PC-9 (cell line): ENCODE measurements at regions of chr9 and their contacts with region 1.

Region 1: DNA sequence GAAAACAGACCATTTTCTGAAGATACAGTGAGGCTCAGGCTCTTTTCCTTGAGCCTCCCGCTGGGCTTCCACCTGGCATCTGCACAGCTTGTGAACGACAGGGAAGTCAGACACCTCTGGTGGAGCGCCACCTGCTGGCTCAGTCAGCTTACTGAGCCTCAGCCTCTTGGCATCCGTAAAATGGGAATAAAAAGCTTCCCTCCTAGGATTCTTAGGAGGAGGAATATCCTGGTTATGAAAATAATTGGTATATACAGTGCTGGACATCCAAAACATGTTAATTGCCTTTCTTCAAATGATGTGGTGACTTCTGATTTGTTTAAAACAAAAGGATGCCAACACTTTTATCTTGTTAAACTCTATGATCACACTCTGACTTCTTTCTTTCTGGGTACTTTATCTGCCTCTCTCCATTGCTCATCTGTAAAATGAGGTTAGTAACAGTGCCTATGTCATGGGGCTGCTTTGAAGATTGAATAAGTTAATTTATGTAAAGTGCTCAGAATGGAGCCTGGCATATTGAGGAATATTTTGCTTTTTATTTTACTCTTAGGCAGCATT is 67.5 kb downstream of the MAMDC2 start:
- DNase-seq: peak; percentile 48 to 58
- H3K4me3 ChIP-seq: no peak overlapping the region
- H3K27ac ChIP-seq: peak overlapping the region; percentile 46
- H3K4me1 ChIP-seq: peaks cover 28% of the 10 kb centered on the region
- H3K27me3 ChIP-seq: no peaks in the 10 kb centered on the region
- CTCF ChIP-seq: peak; percentile 91

Region 2: DNA sequence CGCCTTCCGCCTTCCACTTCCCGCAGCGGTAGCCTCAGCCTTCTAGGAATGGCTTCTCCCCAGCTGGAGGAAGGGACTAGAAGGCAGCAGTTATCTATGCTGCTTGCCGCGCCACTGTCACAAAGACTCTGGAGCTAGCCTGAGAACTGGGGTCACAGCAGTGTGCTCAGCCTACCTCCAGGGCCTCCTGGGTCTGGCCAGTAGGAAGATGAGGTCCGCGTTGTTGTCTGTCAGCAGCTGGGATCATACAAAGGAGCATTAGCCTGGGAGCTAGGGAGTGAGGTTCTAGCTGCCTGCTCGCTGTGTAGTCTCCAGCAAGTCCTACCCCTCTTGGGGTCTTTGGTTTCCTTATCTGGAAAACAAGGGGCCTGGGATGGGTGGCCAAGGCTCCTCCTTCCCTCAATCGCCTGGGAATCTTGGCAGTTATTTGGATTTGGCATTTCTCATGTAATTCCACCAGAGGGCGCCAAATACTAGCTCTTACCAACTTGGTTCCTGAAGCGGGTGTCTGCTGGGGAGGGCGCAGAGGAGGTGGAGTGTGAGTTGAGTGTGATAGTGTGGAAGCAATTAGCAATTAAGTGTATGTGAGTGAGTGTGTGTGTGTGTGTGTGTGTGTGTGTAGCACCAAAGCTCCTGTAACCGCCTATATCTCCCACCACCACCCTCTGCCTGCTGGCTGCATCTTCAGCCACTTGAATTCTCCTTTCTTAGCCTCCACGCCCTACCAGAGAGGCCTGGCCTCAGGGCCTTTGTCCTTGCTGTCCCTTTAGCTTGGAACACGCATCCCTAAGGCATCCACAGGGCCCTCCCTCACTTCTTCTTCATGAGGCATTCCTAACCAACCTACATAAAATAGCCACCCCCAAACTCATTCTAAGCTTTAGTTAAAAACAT is 689.0 kb before region 1 on chr9:
- CTCF ChIA-PET with region 1: no interaction called
- POLR2A ChIA-PET with region 1: no interaction called
- intact Hi-C with region 1: loop called (anchors 5 kb)
- DNase-seq: peak in 1 of 2 experiments; percentile 49
- H3K4me3 ChIP-seq: no peak overlapping the region
- H3K27ac ChIP-seq: no peak overlapping the region
- H3K4me1 ChIP-seq: no peaks in the 10 kb centered on the region
- H3K27me3 ChIP-seq: no peaks in the 10 kb centered on the region
- CTCF ChIP-seq: peak; percentile 93

Region 3: GRCh38 chr9:69768716-69769115 is 342.4 kb before region 1 on chr9:
- CTCF ChIA-PET with region 1: no interaction called
- POLR2A ChIA-PET with region 1: interaction called, 10 read pairs
- intact Hi-C with region 1: no loop called
- DNase-seq: no peak
- H3K4me3 ChIP-seq: no peak overlapping the region
- H3K27ac ChIP-seq: no peak overlapping the region
- H3K4me1 ChIP-seq: no peaks in the 10 kb centered on the region
- H3K27me3 ChIP-seq: no peaks in the 10 kb centered on the region
- CTCF ChIP-seq: no peak

Region 4: DNA sequence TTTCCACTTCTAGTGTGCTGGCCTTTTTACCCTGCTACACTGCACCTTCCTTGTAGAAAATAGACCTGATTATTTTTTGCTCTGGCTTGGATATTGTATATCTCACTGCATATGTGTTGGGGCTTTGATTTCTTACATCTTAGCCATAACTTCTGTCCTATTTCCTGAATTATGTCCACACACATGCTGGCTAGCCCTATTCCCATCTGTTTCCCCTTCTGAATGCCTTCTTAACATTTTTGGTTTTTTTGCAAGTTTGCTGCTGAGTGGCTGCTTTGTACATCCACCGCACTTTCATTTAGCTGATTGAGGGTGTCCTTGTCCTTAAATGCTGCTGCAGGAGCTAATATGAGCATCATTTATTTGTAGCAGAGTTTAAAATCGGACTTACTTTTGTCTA is 263.6 kb before region 1 on chr9:
- CTCF ChIA-PET with region 1: no interaction called
- POLR2A ChIA-PET with region 1: no interaction called
- intact Hi-C with region 1: no loop called
- DNase-seq: no peak
- H3K4me3 ChIP-seq: no peak overlapping the region
- H3K27ac ChIP-seq: no peak overlapping the region
- H3K4me1 ChIP-seq: no peaks in the 10 kb centered on the region
- H3K27me3 ChIP-seq: no peaks in the 10 kb centered on the region
- CTCF ChIP-seq: no peak

Region 5: DNA sequence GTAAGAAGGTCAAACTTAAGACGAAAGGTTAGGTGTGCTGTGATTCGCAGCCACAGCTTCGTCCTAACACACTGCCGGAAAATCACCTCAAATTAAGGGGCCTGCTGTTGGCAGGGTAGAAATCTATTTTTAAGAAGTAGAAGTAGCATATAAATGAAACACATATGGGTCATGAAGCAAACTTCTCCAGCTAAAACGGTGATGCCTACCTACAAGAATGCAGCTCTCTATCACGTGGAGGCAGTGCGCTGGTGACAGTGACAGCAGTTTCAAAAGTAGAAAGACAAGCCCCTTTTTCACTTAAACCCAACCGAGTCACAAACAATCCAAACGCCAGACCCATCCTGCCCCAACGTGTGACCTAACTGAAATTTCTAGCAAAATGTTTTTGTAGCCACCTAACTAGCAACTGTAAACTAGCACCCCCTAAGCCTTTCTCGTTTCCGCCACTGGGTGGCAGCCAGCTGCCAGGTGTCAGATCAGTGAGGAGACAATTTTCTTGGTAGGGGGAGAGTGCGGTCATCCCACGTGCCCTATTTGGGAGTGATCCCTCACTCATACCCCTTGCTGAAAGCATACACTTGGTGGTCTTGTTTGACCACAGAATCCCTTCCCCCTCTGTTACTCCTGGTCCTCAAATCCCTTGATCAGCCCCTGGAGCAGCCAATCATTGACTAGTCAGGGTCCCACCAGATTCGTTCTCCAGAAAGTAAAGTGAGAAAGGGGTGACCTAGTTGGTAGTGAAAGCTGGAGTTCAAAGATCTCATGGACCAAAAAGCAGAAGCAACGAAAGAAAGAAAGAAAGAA is 139.3 kb before region 1 on chr9:
- CTCF ChIA-PET with region 1: interaction called, 27 read pairs
- POLR2A ChIA-PET with region 1: no interaction called
- intact Hi-C with region 1: loop called (anchors 1 kb)
- DNase-seq: peak in 1 of 2 experiments; percentile 73
- H3K4me3 ChIP-seq: no peak overlapping the region
- H3K27ac ChIP-seq: no peak overlapping the region
- H3K4me1 ChIP-seq: no peaks in the 10 kb centered on the region
- H3K27me3 ChIP-seq: no peaks in the 10 kb centered on the region
- CTCF ChIP-seq: peak; percentile 91

Region 6: GRCh38 chr9:70073193-70073592 is 37.9 kb before region 1 on chr9:
- CTCF ChIA-PET with region 1: no interaction called
- POLR2A ChIA-PET with region 1: no interaction called
- intact Hi-C with region 1: no loop called
- DNase-seq: no peak
- H3K4me3 ChIP-seq: no peak overlapping the region
- H3K27ac ChIP-seq: no peak overlapping the region
- H3K4me1 ChIP-seq: no peaks in the 10 kb centered on the region
- H3K27me3 ChIP-seq: no peaks in the 10 kb centered on the region
- CTCF ChIP-seq: no peak

Region 7: GRCh38 chr9:70602321-70603019 is 491.3 kb after region 1 on chr9:
- CTCF ChIA-PET with region 1: interaction called, 3 read pairs
- POLR2A ChIA-PET with region 1: no interaction called
- intact Hi-C with region 1: loop called (anchors 5 kb)
- DNase-seq: peak; percentile 56 to 57
- H3K4me3 ChIP-seq: no peak overlapping the region
- H3K27ac ChIP-seq: no peak overlapping the region
- H3K4me1 ChIP-seq: no peaks in the 10 kb centered on the region
- H3K27me3 ChIP-seq: no peaks in the 10 kb centered on the region
- CTCF ChIP-seq: peak; percentile 87